Activated T-helper 1 cell treated with anti-CD3 and anti-CD28 coated beads, Interleukin-12 subunit alpha, Interleukin-12 subunit beta, Interleukin-2, Interleukin-4 antibody, amounts not matched to agents 30 ng/mL and 10 ng/mL and 1 ng/mL, durations not matched to agents 14 hours and 24 hours and 36 hours (primary cell): ENCODE measurements at regions of chr1 and their contacts with region 1.

Region 1: DNA sequence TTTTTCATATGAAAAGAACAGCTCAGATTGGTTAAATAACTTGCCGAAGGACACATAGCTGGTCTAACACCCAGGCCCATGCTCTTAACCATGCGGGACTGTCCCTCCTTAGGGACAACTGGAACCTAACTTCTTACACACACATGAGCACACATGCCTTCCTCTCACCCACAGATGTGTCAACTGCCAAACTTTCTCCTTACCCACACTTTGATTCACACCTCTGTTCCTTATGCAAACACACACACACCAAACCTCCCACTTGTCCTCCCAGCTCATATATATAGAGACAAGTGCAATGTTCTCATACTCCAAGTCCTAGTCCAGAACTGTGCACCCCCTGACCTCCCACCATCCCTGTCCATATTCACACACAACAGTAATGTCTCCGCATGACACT is 4.3 kb downstream of the RAB25 start:
- DNase-seq: no peak
- H3K4me3 Mint-ChIP-seq: no peak overlapping the region
- H3K27ac Mint-ChIP-seq: peak overlapping the region; percentile 5
- H3K4me1 Mint-ChIP-seq: peaks cover 16% of the 10 kb centered on the region
- H3K27me3 Mint-ChIP-seq: peaks cover 4% of the 10 kb centered on the region

Region 2: DNA sequence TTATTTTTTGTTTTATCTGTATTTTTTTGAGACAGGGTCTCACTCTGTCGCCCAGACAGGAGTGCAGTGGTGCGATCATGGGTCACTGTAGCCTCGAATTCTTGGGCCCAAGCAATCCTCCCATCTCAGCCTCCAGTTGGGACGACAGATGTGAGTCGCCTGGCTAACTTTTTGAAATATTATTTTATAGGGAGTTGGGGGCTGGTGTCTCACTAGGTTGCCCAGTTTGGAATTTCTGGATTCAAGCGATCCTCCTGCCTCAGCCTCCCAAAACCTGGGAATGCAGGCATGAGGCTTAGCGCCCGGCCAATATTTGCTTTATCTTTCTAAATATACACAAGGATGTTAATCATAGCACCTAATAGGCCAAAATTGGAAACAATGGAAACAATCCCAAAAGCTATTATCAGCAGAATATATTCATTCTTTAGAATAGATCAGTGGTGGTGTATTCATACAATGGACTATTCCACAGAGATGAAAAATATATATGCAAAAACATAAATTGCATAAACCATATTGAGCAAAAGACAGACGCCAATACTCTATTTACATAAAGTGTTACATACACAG is 320.4 kb before region 1 on chr1:
- intact Hi-C with region 1: loop called (anchors 1 kb)
- DNase-seq: no peak
- H3K4me3 Mint-ChIP-seq: peak overlapping the region; percentile 99
- H3K27ac Mint-ChIP-seq: peak overlapping the region; percentile 95
- H3K4me1 Mint-ChIP-seq: peaks cover 12% of the 10 kb centered on the region
- H3K27me3 Mint-ChIP-seq: no peaks in the 10 kb centered on the region

Region 3: DNA sequence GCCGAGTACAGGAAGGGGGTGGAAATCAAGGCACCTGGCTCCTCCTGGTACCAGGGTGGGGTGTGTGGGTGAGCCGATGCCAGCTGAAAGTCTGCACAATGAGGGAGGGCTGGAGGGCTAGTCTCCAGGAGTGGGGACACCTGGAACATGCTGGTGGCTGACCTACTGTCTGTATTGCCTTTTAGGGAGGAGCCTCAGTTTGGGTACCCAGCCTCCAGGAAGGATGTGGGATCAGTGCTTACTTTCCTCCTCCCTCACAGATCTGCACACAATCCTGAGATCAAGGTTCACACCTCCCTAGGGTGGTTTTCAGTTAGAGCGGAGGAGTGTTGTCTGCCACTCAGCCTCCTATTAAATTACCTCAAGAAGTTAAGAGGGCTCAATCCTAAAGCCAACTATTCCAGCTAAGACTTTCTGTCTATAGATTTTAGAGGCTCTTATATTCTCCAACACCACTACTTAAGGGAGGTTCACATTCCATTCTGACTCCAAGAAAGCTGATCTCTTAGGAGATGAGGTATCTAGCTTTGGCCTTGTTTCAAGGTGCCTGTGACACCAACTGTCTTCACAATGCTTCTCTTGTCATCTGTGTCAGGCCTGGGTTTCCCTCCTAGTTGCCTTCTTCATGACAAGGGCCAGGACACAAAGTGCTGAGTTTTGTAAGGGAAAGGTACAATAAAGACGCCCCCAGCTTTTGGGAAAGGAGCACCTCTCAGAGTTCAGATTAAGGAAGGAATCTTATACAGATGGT is 60.2 kb before region 1 on chr1:
- intact Hi-C with region 1: loop called (anchors 2 kb)
- DNase-seq: peak; percentile 38
- H3K4me3 Mint-ChIP-seq: peak overlapping the region; percentile 46
- H3K27ac Mint-ChIP-seq: peak overlapping the region; percentile 76
- H3K4me1 Mint-ChIP-seq: peaks cover 30% of the 10 kb centered on the region
- H3K27me3 Mint-ChIP-seq: no peaks in the 10 kb centered on the region

Region 4: DNA sequence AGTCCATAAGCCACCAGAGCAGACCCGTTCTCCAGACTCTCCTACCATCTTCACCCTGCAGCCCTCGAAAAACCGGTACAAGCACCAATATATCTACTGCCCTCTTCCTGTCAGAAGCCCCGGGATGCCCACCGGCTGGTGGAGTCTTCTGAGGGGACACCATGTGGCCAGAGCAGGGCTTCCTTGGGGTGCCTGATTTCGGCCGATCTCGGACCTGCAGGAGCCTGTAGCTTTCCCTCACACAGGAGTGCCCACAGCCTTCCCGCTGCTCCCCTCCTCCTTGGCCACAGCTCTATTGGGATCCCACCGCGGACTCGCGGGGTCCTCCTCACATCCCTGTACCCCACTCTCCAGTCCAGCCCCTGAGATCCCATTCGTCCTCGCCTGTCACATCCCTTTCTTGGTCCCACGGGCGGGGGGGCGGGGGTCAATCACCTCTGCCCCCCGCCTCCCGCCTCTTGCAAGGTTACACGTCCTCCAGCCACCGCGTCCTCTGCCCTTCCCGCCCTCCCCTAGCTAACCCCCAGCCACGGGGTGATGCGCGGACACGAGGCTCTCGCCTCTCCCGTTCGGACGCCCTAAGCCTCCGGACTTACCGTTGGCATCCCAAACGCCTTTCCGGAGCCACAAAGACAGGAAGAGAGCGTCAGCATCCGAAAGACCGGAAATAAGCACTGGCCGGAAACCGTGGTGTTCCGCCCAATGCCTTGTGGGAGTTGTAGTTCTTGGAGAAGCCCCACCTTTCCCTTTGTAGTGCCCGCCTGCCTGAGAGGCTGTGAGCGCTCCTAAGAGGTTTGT is 44.7 kb before region 1 on chr1 and contains the start of gene SSR2:
- intact Hi-C with region 1: loop called (anchors 1 kb)
- DNase-seq: peak; percentile 85
- H3K4me3 Mint-ChIP-seq: peak within 1 kb of the TSS; percentile 98
- H3K27ac Mint-ChIP-seq: peak within 1 kb of the TSS; percentile 94
- H3K4me1 Mint-ChIP-seq: peaks cover 29% of the 10 kb centered on the region
- H3K27me3 Mint-ChIP-seq: peaks cover 4% of the 10 kb centered on the region
- total RNA-seq, gene SSR2: 195 TPM in 2 replicates

Region 5: DNA sequence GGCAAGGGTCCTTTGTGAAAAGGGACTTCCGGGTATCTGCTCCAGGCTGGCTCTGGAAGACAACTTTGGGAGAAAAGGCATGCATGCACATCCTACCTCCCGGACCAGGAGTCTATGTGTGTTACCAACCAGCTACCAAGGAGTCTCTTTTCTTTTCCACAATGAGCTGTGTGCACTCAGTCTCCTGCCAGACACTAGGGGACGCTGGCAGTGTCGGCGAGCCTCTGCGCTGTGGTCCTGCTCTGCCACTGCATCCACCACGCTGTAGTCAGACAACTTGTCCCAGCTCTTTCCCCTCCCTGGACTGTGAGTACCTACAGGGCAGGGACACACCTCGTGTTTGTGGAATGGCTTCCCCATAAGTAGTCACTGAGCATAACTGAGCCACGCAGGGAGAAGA is 39.3 kb before region 1 on chr1:
- intact Hi-C with region 1: loop called (anchors 1 kb)
- DNase-seq: peak; percentile 8
- H3K4me3 Mint-ChIP-seq: no peak overlapping the region
- H3K27ac Mint-ChIP-seq: no peak overlapping the region
- H3K4me1 Mint-ChIP-seq: peaks cover 13% of the 10 kb centered on the region
- H3K27me3 Mint-ChIP-seq: peaks cover 8% of the 10 kb centered on the region

Region 6: GRCh38 chr1:156096640-156097391 is 31.6 kb after region 1 on chr1:
- intact Hi-C with region 1: loop called (anchors 1 kb)
- DNase-seq: peak; percentile 82
- H3K4me3 Mint-ChIP-seq: peak overlapping the region; percentile 23
- H3K27ac Mint-ChIP-seq: peak overlapping the region; percentile 88
- H3K4me1 Mint-ChIP-seq: peaks cover 43% of the 10 kb centered on the region
- H3K27me3 Mint-ChIP-seq: peaks cover 25% of the 10 kb centered on the region